Heart left ventricle (tissue), 16 donors: ENCODE measurements at regions of chr1 and their contacts with region 1.

Region 1: DNA sequence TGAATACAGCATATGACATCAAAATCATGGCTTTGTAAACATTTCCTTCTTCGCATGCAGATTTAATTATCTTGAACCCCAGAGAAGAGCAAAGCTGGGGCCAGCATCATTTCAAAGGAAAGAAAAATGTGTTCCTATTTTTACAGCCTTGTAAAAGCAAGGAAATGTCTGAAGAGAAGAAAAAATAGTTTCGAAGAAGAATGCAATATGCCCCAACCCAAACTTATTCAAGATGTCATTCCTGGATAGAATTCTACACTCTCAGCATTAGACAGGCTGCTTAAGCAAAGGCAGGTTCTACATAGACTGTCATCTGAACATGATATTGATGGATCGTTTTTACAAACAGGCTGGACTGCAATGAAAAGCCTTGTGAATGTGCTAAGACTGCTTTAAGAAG is 900.8 kb downstream of the TTLL7 start:
- DNase-seq: no peak
- ATAC-seq: no peak
- H3K4me3 ChIP-seq: no peak overlapping the region
- H3K27ac ChIP-seq: no peak overlapping the region
- H3K4me1 ChIP-seq: no peaks in the 10 kb centered on the region
- H3K27me3 ChIP-seq: no peaks in the 10 kb centered on the region
- CTCF ChIP-seq: no peak
- POLR2A ChIP-seq: no peak

Region 2: DNA sequence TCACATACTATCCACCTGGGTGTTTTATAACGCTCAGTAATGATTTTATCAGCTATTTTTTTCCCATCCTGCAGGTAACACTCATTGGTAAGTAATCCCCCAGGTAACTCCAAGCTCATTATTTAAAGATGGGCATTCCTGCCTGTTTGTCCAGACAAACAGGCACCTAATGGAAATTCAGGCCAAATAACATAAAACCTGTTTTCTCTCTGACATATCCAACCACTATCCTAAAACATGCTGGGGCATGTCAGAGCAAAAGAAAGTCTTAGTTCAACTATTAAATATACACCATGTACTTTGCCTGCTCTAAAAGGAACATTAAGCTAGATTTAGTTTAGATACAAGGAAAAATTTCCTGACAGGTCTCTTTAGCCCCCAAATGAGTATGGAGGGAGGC is 86.9 kb before region 1 on chr1:
- intact Hi-C with region 1: no loop called
- DNase-seq: no peak
- ATAC-seq: no peak
- H3K4me3 ChIP-seq: no peak overlapping the region
- H3K27ac ChIP-seq: no peak overlapping the region
- H3K4me1 ChIP-seq: no peaks in the 10 kb centered on the region
- H3K27me3 ChIP-seq: no peaks in the 10 kb centered on the region
- CTCF ChIP-seq: no peak
- POLR2A ChIP-seq: no peak

Region 3: DNA sequence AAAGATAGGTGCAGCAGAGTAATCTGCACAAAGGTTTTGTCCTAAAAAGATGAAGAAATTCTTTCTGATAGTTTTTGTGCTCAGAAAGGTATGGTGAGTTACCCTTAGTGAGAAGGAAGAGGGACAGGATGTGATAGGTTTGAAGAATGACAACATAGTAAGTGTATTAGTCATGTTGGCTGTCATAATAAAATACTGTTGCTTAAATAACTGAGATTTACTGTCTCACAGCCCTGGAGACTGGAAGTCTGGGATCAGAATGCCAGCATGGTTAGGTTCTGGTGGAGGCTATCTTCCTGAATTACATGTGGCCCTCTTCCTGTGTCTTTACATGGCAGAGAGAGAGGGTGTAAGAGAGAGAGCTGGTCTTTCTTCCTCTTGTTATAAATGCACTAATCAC is 64.4 kb before region 1 on chr1:
- intact Hi-C with region 1: no loop called
- DNase-seq: no peak
- ATAC-seq: no peak
- H3K4me3 ChIP-seq: no peak overlapping the region
- H3K27ac ChIP-seq: no peak overlapping the region
- H3K4me1 ChIP-seq: no peaks in the 10 kb centered on the region
- H3K27me3 ChIP-seq: no peaks in the 10 kb centered on the region
- CTCF ChIP-seq: no peak
- POLR2A ChIP-seq: no peak

Region 4: GRCh38 chr1:83060221-83060620 is 37.9 kb before region 1 on chr1:
- intact Hi-C with region 1: loop called in 1 of 10 experiments (anchors 2 kb)
- DNase-seq: no peak
- ATAC-seq: no peak
- H3K4me3 ChIP-seq: no peak overlapping the region
- H3K27ac ChIP-seq: no peak overlapping the region
- H3K4me1 ChIP-seq: peaks cover 0 to 4% (median 0%) of the 10 kb centered on the region in 12 donors
- H3K27me3 ChIP-seq: no peaks in the 10 kb centered on the region
- CTCF ChIP-seq: no peak
- POLR2A ChIP-seq: no peak

Region 5: GRCh38 chr1:83075107-83075506 is 23.0 kb before region 1 on chr1:
- intact Hi-C with region 1: no loop called
- DNase-seq: no peak
- ATAC-seq: no peak
- H3K4me3 ChIP-seq: no peak overlapping the region
- H3K27ac ChIP-seq: no peak overlapping the region
- H3K4me1 ChIP-seq: no peaks in the 10 kb centered on the region
- H3K27me3 ChIP-seq: no peaks in the 10 kb centered on the region
- CTCF ChIP-seq: no peak
- POLR2A ChIP-seq: no peak